Naive thymus-derived CD4-positive, alpha-beta T cell (primary cell): ENCODE measurements at regions of chr14 and their contacts with region 1.

Region 1: DNA sequence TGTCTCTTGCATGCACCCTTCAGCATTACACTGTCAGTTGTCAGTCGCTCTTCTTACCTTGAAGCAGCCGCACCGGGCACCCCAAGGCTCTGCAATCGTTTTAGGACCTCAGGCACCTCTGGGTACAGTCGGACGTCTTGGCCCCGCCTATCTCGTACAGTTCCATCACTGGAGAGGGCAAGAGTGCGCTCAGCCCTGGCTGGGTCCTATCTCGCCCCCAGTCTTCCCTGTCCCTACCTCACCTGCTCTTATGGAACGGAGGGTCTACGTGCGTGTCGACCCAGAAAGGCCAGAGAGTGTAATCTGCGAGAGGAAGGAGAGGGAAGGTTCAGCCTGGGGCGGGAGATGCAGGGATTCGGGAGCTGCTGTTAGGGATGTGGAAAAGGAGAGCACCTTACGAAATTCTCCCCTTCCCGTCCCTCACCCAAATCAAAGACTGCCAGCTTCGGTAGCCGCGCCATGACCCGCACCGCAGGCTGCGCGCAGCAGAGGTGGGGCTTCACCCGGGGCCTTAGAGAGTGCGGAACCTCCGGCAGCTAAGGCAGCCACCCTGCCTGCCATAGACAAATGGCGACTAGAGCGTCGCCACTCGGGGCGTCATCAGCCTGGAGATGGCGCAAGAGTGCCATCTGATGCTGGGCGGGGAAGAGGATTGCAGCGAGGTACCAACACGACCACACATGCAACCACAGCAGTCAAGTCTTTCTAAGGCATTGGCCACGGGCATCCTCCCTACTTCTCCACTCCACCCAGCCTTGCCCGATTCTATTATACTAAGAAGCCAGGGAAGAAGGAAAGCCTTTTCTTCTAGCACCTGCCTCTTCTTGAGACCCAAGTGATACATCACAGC is at the start of gene MDP1:
- DNase-seq: peak; percentile 75 to 89 (median 84)
- ATAC-seq: peak; percentile 85
- H3K4me3 ChIP-seq: peak within 1 kb of the TSS; percentile 95
- H3K4me3 Mint-ChIP-seq: peak within 1 kb of the TSS; percentile 89 to 97 (median 95)
- H3K27ac ChIP-seq: peak within 1 kb of the TSS; percentile 91
- H3K27ac Mint-ChIP-seq: peak within 1 kb of the TSS; percentile 80 to 99 (median 96)
- H3K4me1 ChIP-seq: peaks cover 31 to 36% of the 10 kb centered on the region in 2 donors
- H3K4me1 Mint-ChIP-seq: peaks cover 29 to 62% (median 54%) of the 10 kb centered on the region in 7 donors
- H3K27me3 ChIP-seq: no peaks in the 10 kb centered on the region
- H3K27me3 Mint-ChIP-seq: peaks cover 0 to 2% (median 0%) of the 10 kb centered on the region in 5 donors
- total RNA-seq, gene MDP1: 5.5 to 18.5 (median 14.2) TPM

Region 2: GRCh38 chr14:24058260-24058950 is 157.3 kb before region 1 on chr14:
- CTCF ChIA-PET with region 1: interaction called, 3 read pairs
- POLR2A ChIA-PET with region 1: interaction called, 4 read pairs
- intact Hi-C with region 1: loop called in 1 of 2 experiments (anchors 1 kb)
- DNase-seq: peak; percentile 22 to 70 (median 49)
- ATAC-seq: peak; percentile 84
- H3K4me3 ChIP-seq: no peak overlapping the region
- H3K4me3 Mint-ChIP-seq: no peak overlapping the region
- H3K27ac ChIP-seq: no peak overlapping the region
- H3K27ac Mint-ChIP-seq: peak overlapping the region in 5 of 9 donors; percentile 22 to 80 (median 67)
- H3K4me1 ChIP-seq: no peaks in the 10 kb centered on the region
- H3K4me1 Mint-ChIP-seq: peaks cover 0 to 8% (median 2%) of the 10 kb centered on the region in 7 donors
- H3K27me3 ChIP-seq: no peaks in the 10 kb centered on the region
- H3K27me3 Mint-ChIP-seq: peaks cover 0 to 8% (median 2%) of the 10 kb centered on the region in 5 donors

Region 3: GRCh38 chr14:24146978-24147760 is 68.6 kb before region 1 on chr14 and contains the start of gene RNF31:
- CTCF ChIA-PET with region 1: no interaction called
- POLR2A ChIA-PET with region 1: interaction called, 12 read pairs
- intact Hi-C with region 1: loop called (anchors 1 kb)
- DNase-seq: peak; percentile 88 to 98 (median 96)
- ATAC-seq: peak; percentile 95
- H3K4me3 ChIP-seq: peak within 1 kb of the TSS; percentile 98
- H3K4me3 Mint-ChIP-seq: peak within 1 kb of the TSS; percentile 91 to 100 (median 98)
- H3K27ac ChIP-seq: peak within 1 kb of the TSS; percentile 88
- H3K27ac Mint-ChIP-seq: peak within 1 kb of the TSS; percentile 94 to 98 (median 96)
- H3K4me1 ChIP-seq: peaks cover 35 to 47% of the 10 kb centered on the region in 2 donors
- H3K4me1 Mint-ChIP-seq: peaks cover 39 to 73% (median 61%) of the 10 kb centered on the region in 7 donors
- H3K27me3 ChIP-seq: no peaks in the 10 kb centered on the region
- H3K27me3 Mint-ChIP-seq: no peaks in the 10 kb centered on the region
- total RNA-seq, gene RNF31: 64.0 to 151 (median 95.4) TPM

Region 4: DNA sequence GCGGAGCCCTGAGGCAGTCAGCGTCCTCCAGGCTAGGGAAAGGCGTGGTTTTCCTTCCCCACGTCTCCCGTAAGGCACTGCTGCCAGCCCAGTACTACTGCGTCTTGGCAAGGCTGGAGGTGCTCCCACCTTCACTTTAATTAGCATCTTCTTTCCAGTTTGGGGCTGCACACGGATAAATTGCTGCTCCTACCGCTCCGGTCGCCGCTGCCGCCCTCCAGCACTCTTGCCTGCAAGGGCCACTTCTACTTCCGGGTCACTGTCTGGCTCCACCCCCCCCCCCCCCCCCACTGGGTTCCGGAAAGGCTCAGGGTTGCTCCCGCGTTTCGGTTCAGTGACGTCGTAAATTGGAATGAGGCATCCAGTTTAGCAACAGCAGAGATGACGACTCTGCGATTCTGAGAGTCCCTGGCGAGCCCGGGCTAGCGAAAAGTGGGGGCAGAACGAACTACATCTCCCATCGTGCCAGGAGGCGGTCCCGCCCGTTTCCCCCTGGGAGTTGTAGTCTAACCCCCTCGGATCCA is 16.5 kb after region 1 on chr14 and contains the start of gene NEDD8:
- CTCF ChIA-PET with region 1: interaction called, 3 read pairs
- POLR2A ChIA-PET with region 1: interaction called, 117 read pairs
- intact Hi-C with region 1: loop called (anchors 1 kb)
- DNase-seq: peak; percentile 72 to 91 (median 88)
- ATAC-seq: peak; percentile 91
- H3K4me3 ChIP-seq: peak within 1 kb of the TSS; percentile 99
- H3K4me3 Mint-ChIP-seq: peak within 1 kb of the TSS; percentile 86 to 100 (median 96)
- H3K27ac ChIP-seq: peak within 1 kb of the TSS; percentile 89
- H3K27ac Mint-ChIP-seq: peak within 1 kb of the TSS; percentile 89 to 98 (median 93)
- H3K4me1 ChIP-seq: peaks cover 11 to 27% of the 10 kb centered on the region in 2 donors
- H3K4me1 Mint-ChIP-seq: peaks cover 36 to 79% (median 63%) of the 10 kb centered on the region in 7 donors
- H3K27me3 ChIP-seq: no peaks in the 10 kb centered on the region
- H3K27me3 Mint-ChIP-seq: no peaks in the 10 kb centered on the region
- total RNA-seq, gene NEDD8: 73.5 to 175 (median 106) TPM

Region 5: DNA sequence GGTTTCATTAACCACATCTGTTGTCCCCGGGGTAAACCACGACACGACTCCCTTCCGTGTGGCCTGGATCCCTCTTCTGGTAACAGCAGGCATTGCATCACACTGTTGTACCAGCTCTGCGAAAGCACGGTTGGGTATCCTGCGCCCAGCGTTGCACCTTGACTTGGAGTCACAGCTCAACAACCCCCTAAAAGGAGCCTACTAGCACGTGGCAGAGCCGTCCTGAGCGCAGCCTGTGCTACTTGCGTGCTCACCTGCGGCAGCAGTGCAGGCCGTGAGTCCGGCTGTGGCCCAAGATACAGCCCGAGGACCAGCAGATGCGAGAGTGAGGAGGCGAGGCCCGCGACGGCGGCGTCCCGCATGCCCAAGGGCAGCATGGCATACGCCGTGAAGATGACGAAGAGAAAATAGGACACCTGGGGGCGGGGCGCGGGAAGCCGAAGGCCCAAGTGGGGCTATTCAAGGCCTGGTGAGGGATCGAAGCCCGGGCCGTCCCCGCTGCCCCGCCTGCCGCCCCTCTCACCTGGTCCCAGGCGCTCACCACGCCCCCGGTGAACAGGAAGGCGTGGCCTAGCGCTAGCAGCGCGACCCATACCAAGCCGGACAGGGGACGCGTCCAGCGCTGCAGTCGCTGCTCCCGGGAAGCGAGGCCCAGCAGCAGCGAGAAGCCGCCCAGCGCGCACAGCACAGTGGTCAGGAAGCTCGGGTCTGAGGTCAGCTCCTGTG is 116.7 kb after region 1 on chr14:
- CTCF ChIA-PET with region 1: interaction called, 4 read pairs
- POLR2A ChIA-PET with region 1: no interaction called
- intact Hi-C with region 1: loop called (anchors 1 kb)
- DNase-seq: peak; percentile 56 to 93 (median 87)
- ATAC-seq: peak; percentile 90
- H3K4me3 ChIP-seq: peak overlapping the region; percentile 43
- H3K4me3 Mint-ChIP-seq: peak overlapping the region; percentile 66 to 94 (median 83)
- H3K27ac ChIP-seq: no peak overlapping the region
- H3K27ac Mint-ChIP-seq: peak overlapping the region; percentile 57 to 93 (median 84)
- H3K4me1 ChIP-seq: peaks cover 37 to 59% of the 10 kb centered on the region in 2 donors
- H3K4me1 Mint-ChIP-seq: peaks cover 25 to 62% (median 40%) of the 10 kb centered on the region in 7 donors
- H3K27me3 ChIP-seq: peaks cover 7 to 13% of the 10 kb centered on the region in 2 donors
- H3K27me3 Mint-ChIP-seq: peaks cover 9 to 46% (median 17%) of the 10 kb centered on the region in 5 donors